CD8-positive, alpha-beta memory T cell (primary cell): ENCODE measurements at regions of chr6 and their contacts with region 1.

Region 1: DNA sequence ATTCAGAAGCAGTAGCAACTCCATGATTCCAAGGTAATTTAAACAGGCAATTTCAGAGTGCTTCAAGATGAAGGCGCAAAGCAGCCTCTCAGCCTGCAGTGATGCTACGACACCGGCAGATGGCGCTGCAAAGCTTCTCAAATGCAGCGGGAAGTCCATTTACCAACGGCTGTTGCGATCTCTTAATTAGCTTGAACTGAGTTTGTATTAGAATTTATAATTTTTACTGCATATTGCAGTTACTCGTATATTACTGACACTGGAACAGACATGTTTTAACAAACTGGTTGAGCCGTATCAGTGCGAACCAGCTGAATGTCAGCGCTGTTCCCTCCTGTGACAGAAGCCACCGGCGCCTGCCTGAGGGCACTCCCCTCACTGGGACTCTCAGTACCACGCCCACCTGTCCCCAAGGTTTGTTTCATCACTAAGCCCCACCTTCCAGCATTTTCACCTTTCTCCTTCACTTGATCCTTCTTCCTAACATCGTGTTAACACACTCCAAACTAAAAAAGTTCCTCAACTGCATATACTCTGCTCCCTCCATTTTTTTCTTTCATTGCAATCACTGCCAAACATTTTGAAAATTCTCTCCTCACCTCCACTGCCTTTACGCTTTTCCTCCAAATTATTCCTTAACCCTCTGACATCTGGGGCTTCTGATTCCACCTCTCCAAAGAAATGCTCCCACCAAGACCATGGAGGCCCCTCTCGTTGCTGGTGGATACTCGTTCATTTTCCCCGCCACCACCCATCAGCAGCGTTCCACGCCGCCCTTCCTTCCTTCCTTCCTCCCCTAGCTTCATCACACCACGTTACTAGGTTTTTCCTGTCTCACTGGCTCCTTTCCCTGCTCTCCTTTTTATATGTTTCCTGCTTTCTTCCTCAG is 14.5 kb downstream of the GNL1 start:
- DNase-seq: peak; percentile 74 to 85 (median 79)
- H3K4me3 ChIP-seq: peak overlapping the region; percentile 68
- H3K4me3 Mint-ChIP-seq: peak overlapping the region; percentile 83 to 90 (median 86)
- H3K27ac ChIP-seq: peak overlapping the region; percentile 55
- H3K27ac Mint-ChIP-seq: peak overlapping the region; percentile 84 to 97 (median 94)
- H3K4me1 ChIP-seq: peaks cover 33% of the 10 kb centered on the region
- H3K4me1 Mint-ChIP-seq: peaks cover 34 to 39% (median 37%) of the 10 kb centered on the region in 3 donors
- H3K27me3 ChIP-seq: no peaks in the 10 kb centered on the region
- H3K27me3 Mint-ChIP-seq: peaks cover 0 to under 1% of the 10 kb centered on the region in 2 donors

Region 2: GRCh38 chr6:30489081-30490025 is 52.4 kb before region 1 on chr6 and contains the start of gene HLA-E:
- CTCF ChIA-PET with region 1: interaction called, 228 read pairs
- POLR2A ChIA-PET with region 1: interaction called, 77 read pairs
- DNase-seq: peak; percentile 73 to 96 (median 93)
- H3K4me3 ChIP-seq: peak within 1 kb of the TSS; percentile 99
- H3K4me3 Mint-ChIP-seq: peak within 1 kb of the TSS; percentile 93 to 100 (median 99)
- H3K27ac ChIP-seq: peak within 1 kb of the TSS; percentile 98
- H3K27ac Mint-ChIP-seq: peak within 1 kb of the TSS; percentile 93 to 100 (median 98)
- H3K4me1 ChIP-seq: peaks cover 41% of the 10 kb centered on the region
- H3K4me1 Mint-ChIP-seq: peaks cover 39 to 55% (median 44%) of the 10 kb centered on the region in 3 donors
- H3K27me3 ChIP-seq: no peaks in the 10 kb centered on the region
- H3K27me3 Mint-ChIP-seq: peaks cover 0 to 5% of the 10 kb centered on the region in 2 donors
- total RNA-seq, gene HLA-E: 502 to 511 TPM

Region 3: GRCh38 chr6:30515932-30516753 is 25.6 kb before region 1 on chr6:
- CTCF ChIA-PET with region 1: interaction called, 14 read pairs
- POLR2A ChIA-PET with region 1: interaction called, 7 read pairs
- DNase-seq: peak; percentile 79 to 95 (median 95)
- H3K4me3 ChIP-seq: peak overlapping the region; percentile 58
- H3K4me3 Mint-ChIP-seq: peak overlapping the region; percentile 75 to 93 (median 90)
- H3K27ac ChIP-seq: peak overlapping the region; percentile 83
- H3K27ac Mint-ChIP-seq: peak overlapping the region; percentile 85 to 99 (median 98)
- H3K4me1 ChIP-seq: peaks cover 50% of the 10 kb centered on the region
- H3K4me1 Mint-ChIP-seq: peaks cover 52 to 65% (median 63%) of the 10 kb centered on the region in 3 donors
- H3K27me3 ChIP-seq: no peaks in the 10 kb centered on the region
- H3K27me3 Mint-ChIP-seq: no peaks in the 10 kb centered on the region

Region 4: DNA sequence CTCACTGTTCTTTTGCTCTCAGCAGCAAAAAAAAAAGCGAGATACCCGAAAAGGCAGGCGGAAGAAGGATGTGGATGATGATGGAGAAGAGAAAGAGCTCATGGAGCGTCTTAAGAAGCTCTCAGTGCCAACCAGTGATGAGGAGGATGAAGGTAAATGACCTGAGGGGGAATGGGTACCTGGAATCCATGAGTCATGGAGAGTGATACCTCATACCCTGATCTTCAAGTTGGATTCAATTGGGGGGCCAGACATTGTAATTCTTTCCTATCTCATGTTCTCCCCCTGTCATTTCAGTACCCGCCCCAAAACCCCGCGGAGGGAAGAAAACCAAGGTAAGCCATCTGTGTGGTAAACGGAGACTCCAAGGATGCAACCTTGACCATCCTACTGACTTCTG is 36.3 kb after region 1 on chr6:
- CTCF ChIA-PET with region 1: interaction called, 12 read pairs
- POLR2A ChIA-PET with region 1: interaction called, 4 read pairs
- DNase-seq: no peak
- H3K4me3 ChIP-seq: no peak overlapping the region
- H3K4me3 Mint-ChIP-seq: no peak overlapping the region
- H3K27ac ChIP-seq: no peak overlapping the region
- H3K27ac Mint-ChIP-seq: peak overlapping the region in 3 of 8 donors; percentile 12 to 50 (median 43)
- H3K4me1 ChIP-seq: peaks cover 25% of the 10 kb centered on the region
- H3K4me1 Mint-ChIP-seq: peaks cover 28 to 44% (median 33%) of the 10 kb centered on the region in 3 donors
- H3K27me3 ChIP-seq: no peaks in the 10 kb centered on the region
- H3K27me3 Mint-ChIP-seq: no peaks in the 10 kb centered on the region

Region 5: DNA sequence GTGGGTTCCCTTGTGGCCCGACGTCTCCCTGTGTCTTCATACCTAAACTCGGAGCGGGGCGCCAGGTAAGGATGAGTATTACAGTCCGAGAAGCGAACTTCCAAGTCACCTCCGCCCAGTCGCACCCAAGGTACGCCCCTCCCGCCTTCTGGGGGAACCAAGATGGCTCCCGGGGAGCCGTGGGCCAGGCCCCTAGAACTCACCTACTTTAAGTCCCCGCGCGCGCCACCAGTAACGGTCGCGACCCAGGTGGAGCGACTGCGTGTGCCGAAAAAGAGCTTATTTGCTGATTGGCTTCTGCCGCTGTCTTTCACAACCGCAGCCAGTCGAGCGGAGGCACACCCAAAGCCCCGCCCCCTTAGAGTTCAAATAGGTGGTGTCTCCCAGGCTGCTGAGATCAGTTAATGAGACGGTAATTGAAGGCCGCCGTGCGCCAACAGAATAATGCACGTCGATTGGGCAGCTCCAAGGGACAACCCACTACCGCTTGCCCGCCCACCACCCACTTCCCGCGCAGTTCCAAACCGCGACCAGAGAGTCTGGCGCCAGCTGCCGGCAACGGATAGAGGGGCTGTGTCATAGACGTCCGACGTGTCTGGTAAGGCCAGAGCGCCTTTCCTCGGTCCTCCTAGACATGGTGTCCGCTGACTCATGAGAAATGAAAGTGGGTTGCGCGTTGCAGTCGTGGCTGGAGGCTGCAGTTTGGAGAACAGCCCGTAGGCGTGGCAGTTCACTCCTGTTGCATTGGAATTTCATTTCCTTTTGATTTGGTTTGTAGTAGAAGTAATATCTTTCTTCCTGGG is 175.5 kb after region 1 on chr6 and contains the start of gene MDC1:
- CTCF ChIA-PET with region 1: interaction called, 24 read pairs
- POLR2A ChIA-PET with region 1: no interaction called
- DNase-seq: peak; percentile 97 to 100 (median 99)
- H3K4me3 ChIP-seq: peak within 1 kb of the TSS; percentile 85
- H3K4me3 Mint-ChIP-seq: peak within 1 kb of the TSS; percentile 90 to 98 (median 94)
- H3K27ac ChIP-seq: peak within 1 kb of the TSS; percentile 92
- H3K27ac Mint-ChIP-seq: peak within 1 kb of the TSS; percentile 92 to 100 (median 99)
- H3K4me1 ChIP-seq: peaks cover 20% of the 10 kb centered on the region
- H3K4me1 Mint-ChIP-seq: peaks cover 45 to 64% (median 46%) of the 10 kb centered on the region in 3 donors
- H3K27me3 ChIP-seq: no peaks in the 10 kb centered on the region
- H3K27me3 Mint-ChIP-seq: peaks cover 0 to 2% of the 10 kb centered on the region in 2 donors
- total RNA-seq, gene MDC1: 59.4 to 71.1 TPM

Region 6: GRCh38 chr6:30769088-30769852 is 227.5 kb after region 1 on chr6:
- CTCF ChIA-PET with region 1: no interaction called
- POLR2A ChIA-PET with region 1: no interaction called
- DNase-seq: peak; percentile 27 to 68 (median 32)
- H3K4me3 ChIP-seq: peak overlapping the region; percentile 24
- H3K4me3 Mint-ChIP-seq: peak overlapping the region; percentile 16 to 86 (median 74)
- H3K27ac ChIP-seq: peak overlapping the region; percentile 27
- H3K27ac Mint-ChIP-seq: peak overlapping the region; percentile 13 to 92 (median 82)
- H3K4me1 ChIP-seq: peaks cover 37% of the 10 kb centered on the region
- H3K4me1 Mint-ChIP-seq: peaks cover 39 to 66% (median 60%) of the 10 kb centered on the region in 3 donors
- H3K27me3 ChIP-seq: no peaks in the 10 kb centered on the region
- H3K27me3 Mint-ChIP-seq: peaks cover 0 to 3% of the 10 kb centered on the region in 2 donors